PC-3 (cell line): ENCODE measurements at regions of chr2 and their contacts with region 1.

Region 1: DNA sequence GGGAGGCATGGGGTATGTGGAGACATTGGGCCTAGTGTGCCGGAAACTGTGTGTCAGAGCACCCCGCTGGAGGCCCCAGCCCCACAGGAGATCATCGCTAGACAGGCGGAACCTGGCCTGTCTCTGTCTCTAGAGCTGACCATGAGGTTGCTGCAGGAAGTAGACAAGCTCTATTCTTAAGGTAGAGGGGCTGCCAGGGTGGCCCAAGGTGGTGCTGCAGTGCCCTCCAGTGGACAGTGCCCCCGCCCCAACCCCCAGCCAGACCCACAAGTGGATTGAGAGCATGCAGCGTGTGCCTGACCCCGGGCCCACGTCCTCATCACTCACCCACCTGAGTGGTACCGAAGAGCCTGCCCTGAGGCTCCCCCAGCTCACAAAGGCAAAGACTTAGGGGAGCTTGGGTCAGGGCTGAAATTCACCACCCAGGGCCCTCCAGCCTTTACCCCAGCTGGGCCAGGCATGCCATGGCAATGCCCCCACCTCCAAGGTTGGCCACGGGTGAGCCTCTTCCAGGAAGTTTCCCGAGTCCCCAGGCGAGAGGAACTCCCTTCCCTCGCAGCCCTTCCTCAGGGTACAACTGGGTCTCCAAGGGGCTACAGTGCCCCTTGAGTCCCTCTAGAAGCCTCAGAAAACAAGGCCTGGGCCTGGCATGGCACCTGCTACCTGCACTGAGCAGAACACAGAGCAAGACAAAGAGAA is 155.0 kb downstream of the TTC32 start:
- DNase-seq: peak; percentile 35
- ATAC-seq: peak; percentile 21; the same call in 1 of the 2 replicates
- H3K4me3 ChIP-seq: no peak overlapping the region
- H3K27ac ChIP-seq: no peak overlapping the region
- H3K4me1 ChIP-seq: peaks cover 17% of the 10 kb centered on the region
- H3K27me3 ChIP-seq: no peaks in the 10 kb centered on the region
- CTCF ChIP-seq: peak; percentile 63

Region 2: GRCh38 chr2:19369341-19369955 is 377.3 kb before region 1 on chr2:
- CTCF ChIA-PET with region 1: interaction called, 4 read pairs
- POLR2A ChIA-PET with region 1: no interaction called
- intact Hi-C with region 1: loop called (anchors 2 kb)
- DNase-seq: peak; percentile 68
- ATAC-seq: peak; percentile 74
- H3K4me3 ChIP-seq: no peak overlapping the region
- H3K27ac ChIP-seq: no peak overlapping the region
- H3K4me1 ChIP-seq: no peaks in the 10 kb centered on the region
- H3K27me3 ChIP-seq: no peaks in the 10 kb centered on the region
- CTCF ChIP-seq: peak; percentile 83